Activated CD4-positive, alpha-beta T cell treated with anti-CD3 and anti-CD28 coated beads for 36 hours (primary cell): ENCODE measurements at regions of chr17 and their contacts with region 1.

Region 1: DNA sequence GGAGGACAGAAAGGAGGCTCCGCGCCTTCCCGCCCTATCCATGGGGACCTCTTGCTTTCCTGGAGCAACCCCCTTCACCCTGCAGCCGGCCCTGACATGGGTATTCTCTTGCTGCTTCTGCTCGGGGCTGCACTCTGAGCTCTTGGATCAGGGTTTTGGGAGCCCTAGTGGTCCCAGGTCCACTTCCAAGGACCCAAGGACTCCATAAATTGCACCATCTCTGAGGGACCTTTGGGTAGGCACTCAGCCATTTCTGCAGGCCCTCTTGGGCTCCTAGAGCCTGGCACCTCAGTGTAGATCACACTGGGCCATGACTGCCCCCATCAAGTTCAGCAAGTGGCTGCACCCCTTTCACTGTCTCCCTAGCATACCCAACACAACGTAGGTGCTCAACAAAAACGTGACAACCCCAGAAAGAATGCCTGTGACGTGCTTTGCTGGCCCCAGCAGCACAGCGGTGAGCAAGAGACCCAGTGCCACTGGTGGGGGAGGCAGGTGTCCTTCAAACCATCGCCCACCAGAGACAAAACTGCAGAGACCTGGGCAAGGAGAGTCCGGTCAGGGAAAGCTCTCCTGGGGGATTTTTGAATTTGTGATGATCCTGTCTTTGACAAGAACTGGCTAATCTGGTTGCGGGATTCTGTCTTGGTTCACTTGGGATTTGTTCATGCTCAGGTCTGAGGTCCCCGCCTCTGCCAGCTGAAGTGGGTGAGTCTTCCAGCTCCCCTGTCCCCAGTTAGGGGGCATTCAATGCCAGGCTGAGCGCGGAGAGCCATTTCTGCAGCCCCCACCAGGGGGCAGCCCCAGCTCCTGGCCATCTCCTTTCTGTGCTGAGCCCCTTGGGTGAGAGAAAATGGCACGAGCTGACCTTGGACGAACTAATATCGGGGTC is 2.5 kb upstream of the RAB11FIP4 start:
- DNase-seq: peak; percentile 63
- ATAC-seq: peak; percentile 53
- H3K4me3 Mint-ChIP-seq: no peak overlapping the region
- H3K27ac Mint-ChIP-seq: no peak overlapping the region
- H3K4me1 Mint-ChIP-seq: peaks cover 3% of the 10 kb centered on the region
- H3K27me3 Mint-ChIP-seq: peaks cover 26% of the 10 kb centered on the region

Region 2: GRCh38 chr17:31274252-31274651 is 114.8 kb before region 1 on chr17:
- CTCF ChIA-PET with region 1: no interaction called
- POLR2A ChIA-PET with region 1: no interaction called
- intact Hi-C with region 1: no loop called
- DNase-seq: no peak
- ATAC-seq: no peak
- H3K4me3 Mint-ChIP-seq: no peak overlapping the region
- H3K27ac Mint-ChIP-seq: no peak overlapping the region
- H3K4me1 Mint-ChIP-seq: no peaks in the 10 kb centered on the region
- H3K27me3 Mint-ChIP-seq: no peaks in the 10 kb centered on the region

Region 3: GRCh38 chr17:31378638-31379037 is 10.4 kb before region 1 on chr17:
- CTCF ChIA-PET with region 1: interaction called, 17 read pairs
- POLR2A ChIA-PET with region 1: no interaction called
- intact Hi-C with region 1: no loop called
- DNase-seq: no peak
- ATAC-seq: no peak
- H3K4me3 Mint-ChIP-seq: no peak overlapping the region
- H3K27ac Mint-ChIP-seq: no peak overlapping the region
- H3K4me1 Mint-ChIP-seq: no peaks in the 10 kb centered on the region
- H3K27me3 Mint-ChIP-seq: no peaks in the 10 kb centered on the region

Region 4: DNA sequence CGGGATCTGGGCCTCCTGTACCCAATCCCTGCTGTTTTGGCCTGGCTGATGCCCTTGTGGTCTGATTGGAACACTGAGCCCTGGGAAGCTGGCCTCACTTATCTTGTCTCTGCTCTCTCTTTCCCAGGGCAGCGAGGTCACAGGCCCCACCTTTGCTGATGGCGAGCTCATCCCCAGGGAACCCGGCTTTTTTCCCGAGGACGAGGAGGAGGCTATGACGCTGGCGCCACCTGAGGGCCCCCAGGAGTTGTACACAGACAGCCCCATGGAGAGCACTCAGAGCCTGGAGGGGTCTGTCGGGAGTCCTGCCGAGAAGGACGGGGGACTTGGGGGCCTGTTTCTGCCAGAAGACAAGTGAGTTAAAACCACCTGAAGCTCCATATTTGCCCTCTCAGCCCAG is 128.5 kb after region 1 on chr17:
- CTCF ChIA-PET with region 1: interaction called, 3 read pairs
- POLR2A ChIA-PET with region 1: no interaction called
- intact Hi-C with region 1: loop called in 1 of 2 experiments (anchors 2 kb)
- DNase-seq: peak; percentile 40
- ATAC-seq: peak; percentile 33
- H3K4me3 Mint-ChIP-seq: no peak overlapping the region
- H3K27ac Mint-ChIP-seq: no peak overlapping the region
- H3K4me1 Mint-ChIP-seq: peaks cover 9% of the 10 kb centered on the region
- H3K27me3 Mint-ChIP-seq: no peaks in the 10 kb centered on the region

Region 5: GRCh38 chr17:31524926-31525800 is 136.1 kb after region 1 on chr17:
- CTCF ChIA-PET with region 1: interaction called, 15 read pairs
- POLR2A ChIA-PET with region 1: no interaction called
- intact Hi-C with region 1: loop called (anchors 1 kb)
- DNase-seq: peak; percentile 93
- ATAC-seq: peak; percentile 88
- H3K4me3 Mint-ChIP-seq: no peak overlapping the region
- H3K27ac Mint-ChIP-seq: no peak overlapping the region
- H3K4me1 Mint-ChIP-seq: no peaks in the 10 kb centered on the region
- H3K27me3 Mint-ChIP-seq: no peaks in the 10 kb centered on the region

Region 6: DNA sequence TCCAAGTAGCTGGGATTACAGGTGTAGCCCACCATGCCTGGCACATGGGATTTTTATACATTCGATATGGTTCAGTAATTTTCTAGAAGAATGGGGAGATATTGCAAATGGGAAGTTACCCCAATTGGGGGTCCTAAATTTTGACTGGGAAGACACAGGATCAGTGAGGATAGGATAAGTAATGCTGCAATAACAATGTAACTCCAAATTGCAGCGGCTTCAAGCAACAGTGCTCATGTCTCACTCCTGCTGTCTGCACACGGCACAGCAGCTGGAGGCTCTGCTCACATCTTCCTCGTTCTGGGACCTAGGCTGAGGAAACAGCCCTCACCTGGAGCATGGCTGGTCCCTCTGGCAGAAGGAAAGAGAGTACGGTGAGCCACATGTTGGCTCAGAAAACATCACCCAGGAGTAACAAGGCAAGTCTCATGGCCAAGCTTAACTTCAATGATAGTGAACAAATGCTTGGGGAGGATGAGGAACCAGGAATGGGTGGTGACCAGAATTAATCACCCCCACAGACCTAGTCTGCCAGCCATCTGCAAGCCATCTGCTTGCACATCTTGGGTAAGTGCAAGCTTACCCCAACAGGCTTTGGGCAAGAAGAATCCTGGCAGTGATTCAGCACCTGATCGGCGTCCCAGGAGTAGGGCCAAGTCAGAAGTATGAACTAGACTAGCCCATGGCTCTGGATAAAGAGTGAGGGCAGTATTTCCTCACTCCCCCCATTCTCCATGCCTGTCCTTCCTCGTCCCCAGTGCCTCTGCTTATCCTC is 240.9 kb after region 1 on chr17:
- CTCF ChIA-PET with region 1: no interaction called
- POLR2A ChIA-PET with region 1: no interaction called
- intact Hi-C with region 1: no loop called
- DNase-seq: no peak
- ATAC-seq: no peak
- H3K4me3 Mint-ChIP-seq: no peak overlapping the region
- H3K27ac Mint-ChIP-seq: no peak overlapping the region
- H3K4me1 Mint-ChIP-seq: no peaks in the 10 kb centered on the region
- H3K27me3 Mint-ChIP-seq: peaks cover 21% of the 10 kb centered on the region